ENCODE measurements at regions of chr3 and their contacts with region 1.

Region 1: DNA sequence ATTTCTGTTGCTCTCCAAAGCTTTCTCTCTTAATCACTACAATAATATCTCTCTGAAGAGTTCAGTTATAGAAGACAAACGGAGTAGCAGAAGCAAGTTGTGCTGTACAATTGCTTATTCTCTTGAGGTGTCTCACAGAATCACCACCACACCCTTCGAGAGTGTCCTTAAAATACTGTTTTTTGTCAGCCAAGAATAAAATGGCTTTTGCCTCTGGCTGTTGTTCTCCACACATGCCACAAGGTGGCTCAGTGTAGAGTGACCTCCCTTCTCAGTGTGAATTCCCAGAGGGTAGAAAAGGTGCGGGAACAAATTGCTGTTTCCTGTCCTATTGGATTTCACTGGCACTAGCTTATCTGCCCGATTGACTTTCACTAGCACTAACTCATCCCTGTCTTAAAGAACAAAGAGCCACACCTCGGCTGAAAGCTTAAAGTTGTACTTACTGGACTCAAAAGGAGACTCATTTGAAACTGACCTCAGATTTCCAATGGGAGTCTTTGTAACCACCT is 134.2 kb upstream of the SATB1 start:
- DNase-seq: peak; percentile 50
- ATAC-seq: peak; percentile 57
- H3K4me3 Mint-ChIP-seq: peak overlapping the region; percentile 53
- H3K27ac Mint-ChIP-seq: peak overlapping the region; percentile 97
- H3K4me1 Mint-ChIP-seq: peaks cover 74% of the 10 kb centered on the region
- H3K27me3 Mint-ChIP-seq: no peaks in the 10 kb centered on the region

Region 2: GRCh38 chr3:17915341-17915740 is 644.0 kb before region 1 on chr3:
- CTCF ChIA-PET with region 1: no interaction called
- POLR2A ChIA-PET with region 1: no interaction called
- intact Hi-C with region 1: no loop called
- DNase-seq: no peak
- ATAC-seq: no peak
- H3K4me3 Mint-ChIP-seq: no peak overlapping the region
- H3K27ac Mint-ChIP-seq: no peak overlapping the region
- H3K4me1 Mint-ChIP-seq: no peaks in the 10 kb centered on the region
- H3K27me3 Mint-ChIP-seq: peaks cover 14% of the 10 kb centered on the region

Region 3: GRCh38 chr3:18424729-18425640 is 134.4 kb before region 1 on chr3 and contains the start of gene SATB1:
- CTCF ChIA-PET with region 1: interaction called, 3 read pairs
- POLR2A ChIA-PET with region 1: interaction called, 9 read pairs
- intact Hi-C with region 1: loop called in 1 of 2 experiments (anchors 1 kb)
- DNase-seq: peak; percentile 84
- ATAC-seq: peak; percentile 15
- H3K4me3 Mint-ChIP-seq: peak within 1 kb of the TSS; percentile 85
- H3K27ac Mint-ChIP-seq: peak within 1 kb of the TSS; percentile 97
- H3K4me1 Mint-ChIP-seq: peaks cover 71% of the 10 kb centered on the region
- H3K27me3 Mint-ChIP-seq: no peaks in the 10 kb centered on the region
- total RNA-seq, gene SATB1: 471 to 590 TPM

Region 4: GRCh38 chr3:18575573-18575972 is 16.2 kb after region 1 on chr3:
- CTCF ChIA-PET with region 1: interaction called, 21 read pairs
- POLR2A ChIA-PET with region 1: interaction called, 5 read pairs
- intact Hi-C with region 1: no loop called
- DNase-seq: no peak
- ATAC-seq: no peak
- H3K4me3 Mint-ChIP-seq: no peak overlapping the region
- H3K27ac Mint-ChIP-seq: no peak overlapping the region
- H3K4me1 Mint-ChIP-seq: peaks cover 35% of the 10 kb centered on the region
- H3K27me3 Mint-ChIP-seq: no peaks in the 10 kb centered on the region

Region 5: GRCh38 chr3:18618723-18619122 is 59.3 kb after region 1 on chr3:
- CTCF ChIA-PET with region 1: no interaction called
- POLR2A ChIA-PET with region 1: no interaction called
- intact Hi-C with region 1: no loop called
- DNase-seq: no peak
- ATAC-seq: no peak
- H3K4me3 Mint-ChIP-seq: no peak overlapping the region
- H3K27ac Mint-ChIP-seq: no peak overlapping the region
- H3K4me1 Mint-ChIP-seq: peaks cover 2% of the 10 kb centered on the region
- H3K27me3 Mint-ChIP-seq: no peaks in the 10 kb centered on the region

Region 6: GRCh38 chr3:18679238-18679637 is 119.9 kb after region 1 on chr3:
- CTCF ChIA-PET with region 1: interaction called, 5 read pairs
- POLR2A ChIA-PET with region 1: interaction called, 5 read pairs
- intact Hi-C with region 1: loop called (anchors 1 kb)
- DNase-seq: peak; percentile 69
- ATAC-seq: peak; percentile 87
- H3K4me3 Mint-ChIP-seq: peak overlapping the region; percentile 28
- H3K27ac Mint-ChIP-seq: peak overlapping the region; percentile 94
- H3K4me1 Mint-ChIP-seq: peaks cover 84% of the 10 kb centered on the region
- H3K27me3 Mint-ChIP-seq: no peaks in the 10 kb centered on the region

Region 7: GRCh38 chr3:18758047-18758704 is 198.8 kb after region 1 on chr3:
- CTCF ChIA-PET with region 1: interaction called, 27 read pairs
- POLR2A ChIA-PET with region 1: interaction called, 3 read pairs
- intact Hi-C with region 1: loop called (anchors 1 to 5 kb)
- DNase-seq: no peak
- ATAC-seq: peak; percentile 95
- H3K4me3 Mint-ChIP-seq: no peak overlapping the region
- H3K27ac Mint-ChIP-seq: peak overlapping the region; percentile 90
- H3K4me1 Mint-ChIP-seq: peaks cover 48% of the 10 kb centered on the region
- H3K27me3 Mint-ChIP-seq: no peaks in the 10 kb centered on the region

Region 8: GRCh38 chr3:18919158-18919557 is 359.8 kb after region 1 on chr3:
- CTCF ChIA-PET with region 1: no interaction called
- POLR2A ChIA-PET with region 1: no interaction called
- intact Hi-C with region 1: no loop called
- DNase-seq: no peak
- ATAC-seq: peak; percentile 78
- H3K4me3 Mint-ChIP-seq: no peak overlapping the region
- H3K27ac Mint-ChIP-seq: no peak overlapping the region
- H3K4me1 Mint-ChIP-seq: peaks cover 10% of the 10 kb centered on the region
- H3K27me3 Mint-ChIP-seq: peaks cover 2% of the 10 kb centered on the region

Measured in activated CD4-positive, alpha-beta T cell treated with anti-CD3 and anti-CD28 coated beads for 36 hours (primary cell).